Aorta (tissue), 5 donors: ENCODE measurements at regions of chr5 and their contacts with region 1.

Region 1: DNA sequence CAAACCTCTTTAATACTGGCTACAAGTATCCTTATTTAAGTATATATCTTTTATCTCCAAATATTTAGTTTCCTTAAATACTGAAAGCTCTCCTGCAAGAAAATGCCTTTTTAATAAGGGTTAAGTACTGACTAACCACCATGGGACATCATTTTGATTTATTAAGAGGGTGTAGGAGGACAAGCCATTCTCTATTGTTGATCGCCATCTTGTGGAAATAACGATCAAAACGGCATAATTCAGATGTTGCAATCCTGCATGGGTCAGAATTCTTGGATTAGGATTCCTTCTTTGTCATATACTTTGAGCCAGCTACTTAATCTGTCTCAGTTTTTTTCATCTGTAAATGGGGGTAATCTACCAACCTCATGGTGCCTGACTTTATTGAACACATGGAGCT is 28.7 kb upstream of the C5orf46 start:
- DNase-seq: no peak
- ATAC-seq: peak; percentile 86
- H3K4me3 ChIP-seq: no peak overlapping the region
- H3K27ac ChIP-seq: no peak overlapping the region
- H3K4me1 ChIP-seq: peaks cover 4% of the 10 kb centered on the region in 2 donors
- H3K27me3 ChIP-seq: no peaks in the 10 kb centered on the region

Region 2: DNA sequence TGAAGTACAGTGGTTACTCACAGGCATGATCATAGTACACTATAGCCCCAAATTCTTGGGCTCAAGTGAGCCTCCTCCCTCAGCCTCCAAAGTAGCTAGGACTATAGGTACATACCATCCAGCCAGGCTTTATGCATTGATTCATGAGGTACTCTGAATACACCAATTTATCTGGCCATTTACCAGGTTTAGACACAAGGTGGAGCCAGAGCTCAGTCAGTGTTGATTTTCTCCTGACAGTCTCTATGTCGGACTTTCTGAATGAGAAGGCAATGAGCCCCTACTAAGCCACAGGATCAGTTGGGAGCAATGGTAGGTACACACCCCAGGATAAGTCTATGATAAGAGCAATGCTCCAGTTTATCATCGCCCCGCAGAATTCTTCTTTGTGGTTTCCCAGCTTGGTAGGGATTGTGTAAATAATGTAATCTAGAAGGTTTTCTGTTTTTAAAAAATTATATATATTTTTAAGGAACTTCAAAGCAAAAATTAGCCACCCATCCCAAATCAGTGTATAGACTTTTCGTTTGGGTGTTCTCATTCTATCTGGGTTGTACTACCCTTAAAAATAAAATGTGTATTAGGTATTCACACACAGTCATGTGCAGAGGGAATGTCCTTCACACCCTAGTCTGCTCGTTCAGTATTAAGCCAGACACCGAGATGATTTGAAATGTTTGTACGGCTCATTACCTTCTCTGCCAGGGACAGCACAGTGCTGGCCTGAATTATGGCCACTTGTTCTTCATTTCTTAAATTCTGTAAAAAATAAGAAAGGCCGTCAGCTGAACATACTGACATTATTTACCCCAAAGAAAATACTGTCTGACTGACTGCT is 306.8 kb before region 1 on chr5:
- intact Hi-C with region 1: loop called in 1 of 2 experiments (anchors 10 kb)
- DNase-seq: no peak
- ATAC-seq: peak; percentile 79
- H3K4me3 ChIP-seq: no peak overlapping the region
- H3K27ac ChIP-seq: no peak overlapping the region
- H3K4me1 ChIP-seq: no peaks in the 10 kb centered on the region
- H3K27me3 ChIP-seq: no peaks in the 10 kb centered on the region

Region 3: GRCh38 chr5:147857302-147858129 is 77.5 kb before region 1 on chr5:
- intact Hi-C with region 1: loop called (anchors 2 kb)
- DNase-seq: peak in 1 of 2 donors; percentile 60
- ATAC-seq: peak; percentile 75
- H3K4me3 ChIP-seq: no peak overlapping the region
- H3K27ac ChIP-seq: no peak overlapping the region
- H3K4me1 ChIP-seq: no peaks in the 10 kb centered on the region
- H3K27me3 ChIP-seq: no peaks in the 10 kb centered on the region

Region 4: DNA sequence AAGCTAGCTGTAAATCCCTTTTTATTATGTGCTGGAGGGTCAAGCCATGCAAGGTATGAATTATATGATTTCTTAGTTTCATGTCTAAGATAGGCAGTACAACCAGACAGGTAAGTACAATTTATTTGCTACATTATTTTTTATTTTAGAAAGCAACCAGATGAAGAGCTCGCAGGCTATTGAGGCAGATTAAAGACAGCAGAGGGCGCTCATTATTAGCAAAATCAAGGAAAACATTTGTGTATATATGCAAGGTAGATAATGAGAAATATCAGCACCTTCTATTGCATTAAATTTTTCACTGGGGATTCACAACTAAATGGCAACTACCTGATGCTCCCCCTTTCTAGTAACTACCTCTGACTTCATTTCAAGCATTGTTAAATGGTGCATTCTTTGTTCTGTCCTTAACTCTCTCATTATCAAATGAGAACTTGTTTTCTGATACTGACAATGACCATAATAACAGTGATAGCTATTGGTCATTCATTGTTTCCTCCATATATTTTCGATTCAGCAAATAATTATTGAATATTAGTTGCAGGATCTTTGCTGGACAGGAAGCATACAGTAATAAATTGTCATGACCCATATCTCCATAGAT is 47.9 kb before region 1 on chr5:
- intact Hi-C with region 1: loop called (anchors 1 to 2 kb)
- DNase-seq: no peak
- ATAC-seq: no peak
- H3K4me3 ChIP-seq: no peak overlapping the region
- H3K27ac ChIP-seq: no peak overlapping the region
- H3K4me1 ChIP-seq: peaks cover 2 to 7% of the 10 kb centered on the region in 2 donors
- H3K27me3 ChIP-seq: no peaks in the 10 kb centered on the region

Region 5: GRCh38 chr5:148224131-148224742 is 289.2 kb after region 1 on chr5:
- intact Hi-C with region 1: no loop called
- DNase-seq: no peak
- ATAC-seq: no peak
- H3K4me3 ChIP-seq: no peak overlapping the region
- H3K27ac ChIP-seq: no peak overlapping the region
- H3K4me1 ChIP-seq: no peaks in the 10 kb centered on the region
- H3K27me3 ChIP-seq: no peaks in the 10 kb centered on the region